ENCODE measurements at regions of chr9 and their contacts with region 1.

Region 1: GRCh38 chr9:38160613-38161215 is 91.7 kb upstream of the SHB start:
- DNase-seq: peak; percentile 78
- ATAC-seq: peak; percentile 56
- H3K4me3 Mint-ChIP-seq: no peak overlapping the region
- H3K27ac Mint-ChIP-seq: no peak overlapping the region
- H3K4me1 Mint-ChIP-seq: peaks cover 2% of the 10 kb centered on the region
- H3K27me3 Mint-ChIP-seq: no peaks in the 10 kb centered on the region
- CTCF ChIP-seq: peak; percentile 93

Region 2: GRCh38 chr9:38172585-38172984 is 11.9 kb after region 1 on chr9:
- CTCF ChIA-PET with region 1: interaction called, 35 read pairs
- POLR2A ChIA-PET with region 1: no interaction called
- intact Hi-C with region 1: no loop called
- DNase-seq: no peak
- ATAC-seq: no peak
- H3K4me3 Mint-ChIP-seq: no peak overlapping the region
- H3K27ac Mint-ChIP-seq: no peak overlapping the region
- H3K4me1 Mint-ChIP-seq: no peaks in the 10 kb centered on the region
- H3K27me3 Mint-ChIP-seq: peaks cover 1% of the 10 kb centered on the region
- CTCF ChIP-seq: no peak

Region 3: GRCh38 chr9:38192731-38193265 is 32.1 kb after region 1 on chr9:
- CTCF ChIA-PET with region 1: no interaction called
- POLR2A ChIA-PET with region 1: no interaction called
- intact Hi-C with region 1: no loop called
- DNase-seq: no peak
- ATAC-seq: no peak
- H3K4me3 Mint-ChIP-seq: no peak overlapping the region
- H3K27ac Mint-ChIP-seq: no peak overlapping the region
- H3K4me1 Mint-ChIP-seq: no peaks in the 10 kb centered on the region
- H3K27me3 Mint-ChIP-seq: no peaks in the 10 kb centered on the region
- CTCF ChIP-seq: no peak

Region 4: GRCh38 chr9:38346811-38347210 is 186.1 kb after region 1 on chr9:
- CTCF ChIA-PET with region 1: no interaction called
- POLR2A ChIA-PET with region 1: no interaction called
- intact Hi-C with region 1: no loop called
- DNase-seq: no peak
- ATAC-seq: no peak
- H3K4me3 Mint-ChIP-seq: no peak overlapping the region
- H3K27ac Mint-ChIP-seq: no peak overlapping the region
- H3K4me1 Mint-ChIP-seq: no peaks in the 10 kb centered on the region
- H3K27me3 Mint-ChIP-seq: peaks cover 4% of the 10 kb centered on the region
- CTCF ChIP-seq: no peak

Measured in activated CD8-positive, alpha-beta T cell treated with anti-CD3 and anti-CD28 coated beads for 36 hours (primary cell).